ENCODE measurements at regions of chr4 and their contacts with region 1.

Region 1: DNA sequence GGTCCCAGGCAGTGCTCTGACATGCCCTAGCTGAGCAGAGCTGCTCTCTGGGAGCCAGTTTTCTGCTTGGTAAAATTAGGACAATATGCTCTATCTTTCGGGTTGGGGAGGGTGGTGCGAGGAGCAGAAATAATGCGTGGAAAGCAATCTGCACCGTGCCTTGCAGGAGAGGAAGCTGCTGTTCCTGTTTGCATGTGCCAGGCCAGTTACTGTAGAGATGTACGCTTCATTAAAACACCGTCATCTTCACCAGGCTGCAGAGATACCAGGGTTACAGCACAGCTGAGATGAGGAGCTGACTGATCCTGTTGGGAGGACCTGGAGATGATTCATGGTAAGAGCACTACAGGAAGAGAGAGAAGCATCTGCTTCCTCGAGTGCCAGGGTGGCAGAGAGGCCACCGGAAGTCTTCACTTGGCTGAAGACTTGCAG is 29.5 kb upstream of the IRF2 start:
- DNase-seq: no peak

Region 2: DNA sequence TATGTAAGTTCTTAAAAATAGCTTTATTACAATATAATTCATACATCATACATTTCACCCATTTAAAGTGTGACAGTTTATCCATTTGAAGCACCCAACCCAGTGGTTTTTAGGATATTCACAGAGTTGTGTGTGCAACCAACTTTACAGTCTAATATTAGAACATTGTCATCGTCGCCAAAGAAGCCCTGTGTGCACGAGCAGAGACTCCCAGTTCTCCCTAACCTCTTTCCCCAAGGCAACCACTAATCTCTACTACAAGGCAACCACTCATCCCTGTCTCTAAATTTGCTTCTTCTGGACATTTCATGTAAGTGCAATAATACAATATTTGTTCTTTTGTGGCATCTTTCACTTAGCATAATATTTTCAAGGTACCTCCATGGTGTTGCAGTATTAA is 1231.5 kb before region 1 on chr4:
- intact Hi-C with region 1: loop called in 1 of 2 experiments (anchors 5 kb)
- DNase-seq: no peak

Region 3: DNA sequence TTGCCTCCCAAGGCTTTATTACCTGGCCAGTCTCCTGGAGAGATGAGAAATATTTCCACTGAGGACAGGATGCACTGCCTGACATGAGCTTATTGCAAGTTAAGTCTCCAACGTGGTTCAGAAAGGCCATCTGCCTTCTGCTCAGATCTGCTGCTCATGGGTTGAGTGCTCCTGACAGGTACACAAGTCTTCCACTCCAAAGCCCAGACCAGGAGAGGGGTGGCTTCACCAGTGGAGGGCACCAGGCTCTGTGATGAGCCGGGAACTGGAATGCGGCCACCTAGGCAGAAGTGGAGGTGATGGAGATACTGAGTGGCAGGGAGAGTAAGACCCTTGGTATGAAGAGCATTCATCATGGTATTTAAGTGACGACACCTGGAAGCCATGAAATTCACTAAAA is 50.0 kb after region 1 on chr4:
- intact Hi-C with region 1: loop called in 1 of 2 experiments (anchors 2 kb)
- DNase-seq: no peak

Measured in posterior vena cava (tissue), 2 donors.